ENCODE measurements at regions of chr18 and their contacts with region 1.

Region 1: DNA sequence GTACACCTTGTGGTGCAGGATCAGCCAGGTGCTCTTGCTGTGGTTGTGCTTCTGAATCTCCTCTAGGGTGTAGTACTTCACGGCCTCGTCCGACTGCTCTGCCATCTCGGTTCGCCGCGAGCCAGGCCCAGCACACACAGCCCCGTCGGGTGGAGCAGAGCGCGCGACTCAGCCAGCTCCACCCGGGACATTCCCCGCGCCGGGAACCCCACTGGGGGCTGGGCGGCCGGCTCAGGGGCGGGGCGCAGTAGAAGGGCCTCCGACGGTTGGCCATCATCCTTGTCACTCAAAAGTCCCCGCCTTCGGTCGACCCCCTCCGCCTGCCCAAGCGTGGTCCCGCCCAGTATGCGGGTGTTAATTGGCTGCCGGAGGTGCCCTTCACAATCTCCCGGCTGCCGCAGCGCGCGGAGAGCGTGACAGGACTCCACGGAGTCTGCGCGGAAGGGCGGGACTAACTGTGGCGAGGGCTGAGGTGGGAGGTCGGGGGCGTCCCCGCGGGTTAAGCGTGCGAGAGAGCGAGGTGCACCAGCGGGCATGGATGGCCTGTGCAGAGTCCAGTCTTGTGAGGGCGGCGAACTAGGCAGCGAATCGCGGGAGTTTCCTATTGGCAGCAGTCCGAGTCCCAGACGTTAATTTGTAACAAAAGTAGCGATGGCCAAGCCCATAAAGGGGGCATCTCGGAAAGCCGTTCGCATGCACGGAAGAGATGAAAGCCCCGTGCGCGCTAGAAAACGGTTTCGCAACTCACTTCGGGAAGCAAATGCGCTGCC is at the start of gene CYB5A:
- H3K4me3 Mint-ChIP-seq: peak within 1 kb of the TSS; percentile 98
- H3K27ac Mint-ChIP-seq: peak within 1 kb of the TSS; percentile 87
- H3K4me1 Mint-ChIP-seq: peaks cover 23% of the 10 kb centered on the region
- H3K27me3 Mint-ChIP-seq: peaks cover 5% of the 10 kb centered on the region

Region 2: GRCh38 chr18:74147779-74148542 is 144.0 kb before region 1 on chr18 and contains the starts of genes FBXO15 and TIMM21:
- intact Hi-C with region 1: loop called (anchors 2 kb)
- H3K4me3 Mint-ChIP-seq: peak within 1 kb of the TSS; percentile 92
- H3K27ac Mint-ChIP-seq: peak within 1 kb of the TSS; percentile 97
- H3K4me1 Mint-ChIP-seq: peaks cover 41% of the 10 kb centered on the region
- H3K27me3 Mint-ChIP-seq: peaks cover 4% of the 10 kb centered on the region

Measured in dendritic cell treated with granulocyte-macrophage colony-stimulating factor and Interleukin-4, amounts not matched to agents 40 ng/mL and 50 ng/mL, for 4 days (primary cell).